HCT116 (cell line): ENCODE measurements at regions of chr19 and their contacts with region 1.

Region 1: DNA sequence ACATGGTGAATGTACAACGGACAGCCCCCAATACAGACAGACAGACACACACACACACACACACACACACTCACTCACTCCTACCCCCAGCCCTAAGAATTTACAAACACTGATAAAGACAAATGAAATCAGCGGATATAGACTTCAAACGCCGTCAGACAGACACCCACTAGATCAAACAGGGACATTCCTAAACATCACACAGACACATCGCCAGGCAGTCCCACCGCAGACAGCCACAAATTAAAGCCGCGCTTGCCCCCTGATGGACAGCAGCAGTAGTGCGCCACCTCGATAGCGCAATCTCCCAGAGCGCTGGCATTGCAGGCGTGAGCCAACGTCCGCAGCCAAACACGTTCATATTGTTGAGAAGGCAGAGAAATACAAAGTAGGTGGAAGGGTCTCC is 24.7 kb upstream of the ADGRE1 start:
- DNase-seq: peak; percentile 81
- ATAC-seq: peak; percentile 83
- H3K4me3 ChIP-seq: peak overlapping the region; percentile 28 to 32
- H3K27ac ChIP-seq: no peak overlapping the region
- H3K4me1 ChIP-seq: peaks cover 0 to 8% of the 10 kb centered on the region in 2 experiments; a peak in 2 of 4 replicates
- H3K27me3 ChIP-seq: no peaks in the 10 kb centered on the region
- CTCF ChIP-seq: peak; percentile 85 to 96 (median 92)
- POLR2A ChIP-seq: no peak
- RAD21 ChIP-seq: peak; percentile 99

Region 2: GRCh38 chr19:6125571-6125989 is 737.1 kb before region 1 on chr19:
- CTCF ChIA-PET with region 1: interaction called, 18 read pairs
- POLR2A ChIA-PET with region 1: no interaction called
- RAD21 ChIA-PET with region 1: no interaction called
- intact Hi-C with region 1: loop called (anchors 2 kb)
- DNase-seq: peak; percentile 88
- ATAC-seq: peak; percentile 88
- H3K4me3 ChIP-seq: no peak overlapping the region
- H3K27ac ChIP-seq: no peak overlapping the region
- H3K4me1 ChIP-seq: peaks cover 0 to 5% of the 10 kb centered on the region in 2 experiments; a peak in 1 of 4 replicates
- H3K27me3 ChIP-seq: peaks cover under 1% of the 10 kb centered on the region; the same call in 1 of the 2 replicates
- CTCF ChIP-seq: peak; percentile 91 to 97 (median 96)
- POLR2A ChIP-seq: no peak
- RAD21 ChIP-seq: peak; percentile 97

Region 3: DNA sequence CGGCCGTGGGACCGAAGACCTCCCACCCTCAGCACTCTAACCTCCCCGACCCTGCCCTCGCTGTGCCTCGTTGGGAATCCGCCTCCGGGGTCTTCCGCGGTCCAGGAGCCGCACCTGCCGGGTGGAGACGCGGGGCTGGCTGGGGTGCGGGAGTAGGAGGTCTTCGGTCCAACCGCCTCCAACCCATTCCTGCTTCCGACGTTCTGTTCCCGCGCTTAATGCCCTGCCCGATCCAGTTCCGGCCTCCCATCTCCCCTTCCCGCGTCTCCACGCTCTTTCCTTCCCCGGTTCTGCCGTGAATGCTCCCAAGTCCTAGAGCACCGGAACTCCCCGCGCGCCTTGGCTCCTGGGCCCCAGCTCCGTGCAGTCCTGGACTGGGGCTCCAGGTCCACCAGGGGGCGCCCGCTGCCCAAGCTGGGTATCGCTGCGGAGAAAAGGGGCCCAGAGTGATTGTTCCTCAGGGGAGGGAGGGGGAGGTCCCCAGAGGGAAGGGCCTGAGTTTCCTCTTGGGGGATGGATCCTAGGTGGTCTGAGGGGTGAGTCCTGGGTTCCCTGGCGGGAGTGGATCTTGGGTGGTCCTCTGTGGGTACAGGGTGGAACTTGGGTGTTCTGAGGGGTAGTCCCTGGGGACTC is 345.9 kb before region 1 on chr19:
- CTCF ChIA-PET with region 1: interaction called, 19 read pairs
- POLR2A ChIA-PET with region 1: no interaction called
- RAD21 ChIA-PET with region 1: interaction called in 1 of 2 experiments, 6 read pairs
- intact Hi-C with region 1: loop called (anchors 1 kb)
- DNase-seq: peak; percentile 66
- ATAC-seq: peak; percentile 84
- H3K4me3 ChIP-seq: peak overlapping the region; percentile 62 to 70
- H3K27ac ChIP-seq: peak overlapping the region; percentile 70
- H3K4me1 ChIP-seq: peaks cover 10 to 33% of the 10 kb centered on the region in 2 experiments; a peak in 3 of 4 replicates
- H3K27me3 ChIP-seq: no peaks in the 10 kb centered on the region
- CTCF ChIP-seq: peak; percentile 96 to 99 (median 98)
- POLR2A ChIP-seq: no peak
- RAD21 ChIP-seq: peak; percentile 99

Region 4: GRCh38 chr19:6737284-6738046 is 125.2 kb before region 1 on chr19 and contains the start of gene GPR108:
- CTCF ChIA-PET with region 1: interaction called, 91 read pairs
- POLR2A ChIA-PET with region 1: interaction called, 13 read pairs
- RAD21 ChIA-PET with region 1: interaction called, 16 read pairs
- intact Hi-C with region 1: loop called (anchors 1 kb)
- DNase-seq: peak; percentile 100
- ATAC-seq: peak; percentile 72
- H3K4me3 ChIP-seq: peak within 1 kb of the TSS; percentile 99
- H3K27ac ChIP-seq: peak within 1 kb of the TSS; percentile 87
- H3K4me1 ChIP-seq: peaks cover 32 to 44% of the 10 kb centered on the region in 2 experiments
- H3K27me3 ChIP-seq: no peaks in the 10 kb centered on the region
- CTCF ChIP-seq: no peak
- POLR2A ChIP-seq: no peak
- RAD21 ChIP-seq: no peak
- total RNA-seq, gene GPR108: 75.0 TPM

Region 5: DNA sequence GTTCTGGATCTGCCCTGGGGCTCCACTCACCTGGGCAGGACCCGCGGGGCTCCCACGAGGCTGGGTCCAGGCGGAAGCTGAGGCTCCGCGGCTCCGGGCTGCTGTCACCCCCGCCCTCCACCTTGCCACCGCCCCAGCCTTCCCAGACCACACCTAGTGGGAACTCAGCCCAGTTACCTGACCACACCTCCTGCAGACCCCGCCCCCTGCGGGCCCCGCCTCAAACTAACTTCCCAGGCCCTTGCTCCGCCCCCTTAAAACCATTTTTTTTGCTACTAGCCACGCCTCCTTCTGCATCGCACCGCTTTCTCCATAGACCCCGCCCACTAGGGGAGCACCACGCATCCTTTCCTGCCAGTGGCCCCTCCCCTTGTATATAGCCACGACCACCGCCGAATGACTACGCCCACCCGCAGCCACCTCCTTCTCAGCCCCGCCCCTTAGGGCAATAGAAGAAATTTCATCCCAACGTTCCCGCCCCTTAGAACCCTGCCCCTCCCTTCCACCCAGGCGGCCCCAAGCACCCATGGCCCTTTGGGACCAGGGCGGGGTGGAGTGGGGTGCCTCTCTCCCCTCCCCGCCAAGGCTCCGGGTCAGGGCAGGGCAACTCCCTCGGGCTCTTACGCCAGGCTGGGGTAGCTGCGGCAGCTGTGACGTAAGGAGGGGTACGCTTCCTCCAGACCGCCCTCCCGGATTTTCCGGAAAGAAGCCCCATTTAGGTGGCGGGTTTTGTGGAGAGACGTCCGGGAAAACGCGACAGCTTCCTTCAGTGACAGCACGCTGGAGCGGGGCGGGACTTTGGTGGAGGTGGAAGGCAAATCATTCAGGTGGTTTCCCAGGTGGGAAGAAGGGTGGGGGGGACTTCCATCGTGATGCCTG is 95.1 kb before region 1 on chr19 and contains the start of gene SH2D3A:
- CTCF ChIA-PET with region 1: interaction called, 5 read pairs
- POLR2A ChIA-PET with region 1: interaction called, 3 read pairs
- RAD21 ChIA-PET with region 1: no interaction called
- intact Hi-C with region 1: loop called (anchors 2 kb)
- DNase-seq: peak; percentile 96
- ATAC-seq: peak; percentile 81
- H3K4me3 ChIP-seq: peak within 1 kb of the TSS; percentile 71 to 96
- H3K27ac ChIP-seq: peak within 1 kb of the TSS; percentile 93
- H3K4me1 ChIP-seq: peaks cover 24 to 50% of the 10 kb centered on the region in 2 experiments
- H3K27me3 ChIP-seq: no peaks in the 10 kb centered on the region
- CTCF ChIP-seq: 0 out of 6 replicates have a peak, but pooled peaks of 1 of the 3 experiments have one; percentile 0
- POLR2A ChIP-seq: no peak
- RAD21 ChIP-seq: no peak
- total RNA-seq, gene SH2D3A: 75.7 TPM

Region 6: GRCh38 chr19:7340959-7341837 is 478.5 kb after region 1 on chr19:
- CTCF ChIA-PET with region 1: no interaction called
- POLR2A ChIA-PET with region 1: no interaction called
- RAD21 ChIA-PET with region 1: no interaction called
- intact Hi-C with region 1: no loop called
- DNase-seq: peak; percentile 67
- ATAC-seq: peak; percentile 75
- H3K4me3 ChIP-seq: peak overlapping the region in 1 of 2 experiments; percentile 20; a peak in 2 of 4 replicates
- H3K27ac ChIP-seq: no peak overlapping the region
- H3K4me1 ChIP-seq: peaks cover 2 to 20% of the 10 kb centered on the region in 2 experiments; a peak in 3 of 4 replicates
- H3K27me3 ChIP-seq: no peaks in the 10 kb centered on the region
- CTCF ChIP-seq: peak; percentile 89 to 95 (median 94)
- POLR2A ChIP-seq: no peak
- RAD21 ChIP-seq: peak; percentile 98